ENCODE measurements at regions of chr2 and their contacts with region 1.

Region 1: GRCh38 chr2:85288244-85288725 is 39.5 kb downstream of the TGOLN2 start:
- DNase-seq: no peak
- ATAC-seq: no peak

Region 2: GRCh38 chr2:85132834-85133637 is 155.2 kb before region 1 on chr2 and contains the start of gene TCF7L1:
- intact Hi-C with region 1: loop called (anchors 5 kb)
- DNase-seq: peak; percentile 91
- ATAC-seq: peak; percentile 95
- total RNA-seq, gene TCF7L1: 7.1 TPM

Region 3: DNA sequence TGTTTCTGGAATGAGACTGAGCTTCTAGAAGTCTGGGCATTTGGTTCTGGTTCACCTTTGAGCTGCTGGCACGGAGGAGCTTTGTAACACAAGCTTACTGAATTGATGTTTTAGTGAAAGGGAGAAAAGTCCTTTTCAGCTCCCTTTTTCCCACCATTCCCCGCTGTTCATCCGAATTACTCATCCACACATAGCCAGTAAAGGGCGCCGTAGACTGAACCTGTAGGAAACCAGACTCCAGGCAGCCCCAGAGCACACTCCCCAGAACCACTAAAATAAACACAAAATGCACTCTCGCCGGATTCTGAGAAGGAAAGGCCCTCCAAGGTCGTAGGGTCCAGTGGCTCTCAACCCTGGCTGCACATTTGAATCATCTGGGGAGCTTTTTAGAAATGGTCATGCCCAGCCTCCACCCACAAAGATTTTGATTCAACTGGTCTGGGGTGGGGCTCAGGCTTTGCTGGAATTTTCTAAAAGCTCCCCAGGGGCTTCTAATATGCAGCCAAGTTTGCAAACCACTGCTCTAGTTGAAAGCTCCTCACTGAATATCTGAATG is 125.5 kb before region 1 on chr2:
- intact Hi-C with region 1: no loop called
- DNase-seq: no peak
- ATAC-seq: peak; percentile 68

Region 4: DNA sequence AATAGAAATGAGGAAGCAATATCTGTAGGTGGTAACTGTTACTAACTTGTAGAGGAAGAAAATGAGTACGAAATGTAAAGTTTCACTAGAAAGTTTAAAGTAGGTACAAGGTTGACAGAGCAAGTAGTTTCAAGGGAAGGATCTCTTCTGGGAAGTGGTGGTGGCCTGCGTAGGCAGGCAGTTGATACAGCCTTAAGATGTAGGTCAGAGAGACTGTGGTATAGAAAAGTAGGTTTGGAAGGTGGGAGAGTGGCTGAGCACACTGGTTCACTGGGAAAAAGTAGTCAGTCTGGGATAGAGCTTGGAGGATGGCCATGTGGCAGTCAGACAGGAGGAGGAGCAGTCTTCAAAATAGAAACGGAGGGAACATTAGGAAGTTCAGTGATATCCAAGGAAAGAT is 1176.4 kb after region 1 on chr2:
- intact Hi-C with region 1: no loop called
- DNase-seq: peak; percentile 30
- ATAC-seq: peak; percentile 83